ENCODE measurements at regions of chr1 and their contacts with region 1.

Region 1: GRCh38 chr1:202235856-202236837 is 42.5 kb downstream of the LGR6 start:
- DNase-seq: peak; percentile 79
- H3K4me3 ChIP-seq: peak overlapping the region; percentile 43
- CTCF ChIP-seq: peak; percentile 86

Region 2: DNA sequence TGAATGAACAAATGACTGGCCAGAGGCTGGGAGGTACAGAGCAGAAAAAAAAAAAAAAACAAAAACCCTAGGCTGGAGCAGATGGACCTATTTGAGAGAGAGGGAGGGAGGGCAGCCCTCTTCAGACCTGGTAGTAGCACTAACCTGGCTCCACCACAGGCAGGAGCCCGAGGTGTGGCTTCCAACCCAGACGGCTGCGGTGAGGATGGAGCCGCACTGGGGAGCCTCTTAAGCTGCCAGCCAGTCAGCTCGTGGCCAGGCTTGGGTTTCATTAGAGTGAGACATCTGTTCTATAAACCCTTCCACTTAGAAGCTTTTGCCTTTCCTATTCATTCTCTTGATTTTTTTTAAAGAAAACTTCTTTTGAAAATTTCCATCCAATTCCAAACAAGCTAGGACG is 25.8 kb before region 1 on chr1:
- CTCF ChIA-PET with region 1: interaction called, 11 read pairs
- POLR2A ChIA-PET with region 1: no interaction called
- DNase-seq: no peak
- H3K4me3 ChIP-seq: no peak overlapping the region
- CTCF ChIP-seq: peak; percentile 3

Region 3: GRCh38 chr1:202247894-202248681 is 11.9 kb after region 1 on chr1:
- CTCF ChIA-PET with region 1: interaction called, 27 read pairs
- POLR2A ChIA-PET with region 1: interaction called, 4 read pairs
- DNase-seq: no peak
- H3K4me3 ChIP-seq: no peak overlapping the region
- CTCF ChIP-seq: no peak

Region 4: DNA sequence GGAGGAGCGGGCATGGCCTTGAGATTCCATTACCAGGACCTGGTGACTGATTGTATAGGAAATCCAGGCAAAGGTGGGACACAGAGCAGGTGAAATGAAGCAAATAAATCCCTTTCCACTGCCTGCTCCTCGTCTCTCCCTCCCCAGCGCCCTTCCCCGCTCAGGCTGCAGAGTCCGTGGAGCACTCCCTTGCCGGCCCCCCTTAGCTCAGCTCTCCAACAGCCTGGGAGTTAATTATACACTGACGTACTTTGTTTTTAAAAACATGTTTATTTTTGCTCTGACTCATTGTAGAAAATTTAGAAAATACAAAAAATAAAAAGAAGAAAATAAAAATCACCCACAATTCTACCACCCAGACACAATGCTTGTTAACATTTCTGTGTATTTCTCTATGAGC is 19.2 kb after region 1 on chr1:
- CTCF ChIA-PET with region 1: interaction called, 18 read pairs
- POLR2A ChIA-PET with region 1: no interaction called
- DNase-seq: no peak
- H3K4me3 ChIP-seq: no peak overlapping the region
- CTCF ChIP-seq: no peak

Region 5: GRCh38 chr1:202283379-202283844 is 47.3 kb after region 1 on chr1:
- CTCF ChIA-PET with region 1: interaction called, 11 read pairs
- POLR2A ChIA-PET with region 1: interaction called, 5 read pairs
- DNase-seq: peak; percentile 40
- H3K4me3 ChIP-seq: no peak overlapping the region
- CTCF ChIP-seq: no peak

Measured in AG04449 (cell line).